Sigmoid colon (tissue), 7 donors: ENCODE measurements at regions of chr9 and their contacts with region 1.

Region 1: DNA sequence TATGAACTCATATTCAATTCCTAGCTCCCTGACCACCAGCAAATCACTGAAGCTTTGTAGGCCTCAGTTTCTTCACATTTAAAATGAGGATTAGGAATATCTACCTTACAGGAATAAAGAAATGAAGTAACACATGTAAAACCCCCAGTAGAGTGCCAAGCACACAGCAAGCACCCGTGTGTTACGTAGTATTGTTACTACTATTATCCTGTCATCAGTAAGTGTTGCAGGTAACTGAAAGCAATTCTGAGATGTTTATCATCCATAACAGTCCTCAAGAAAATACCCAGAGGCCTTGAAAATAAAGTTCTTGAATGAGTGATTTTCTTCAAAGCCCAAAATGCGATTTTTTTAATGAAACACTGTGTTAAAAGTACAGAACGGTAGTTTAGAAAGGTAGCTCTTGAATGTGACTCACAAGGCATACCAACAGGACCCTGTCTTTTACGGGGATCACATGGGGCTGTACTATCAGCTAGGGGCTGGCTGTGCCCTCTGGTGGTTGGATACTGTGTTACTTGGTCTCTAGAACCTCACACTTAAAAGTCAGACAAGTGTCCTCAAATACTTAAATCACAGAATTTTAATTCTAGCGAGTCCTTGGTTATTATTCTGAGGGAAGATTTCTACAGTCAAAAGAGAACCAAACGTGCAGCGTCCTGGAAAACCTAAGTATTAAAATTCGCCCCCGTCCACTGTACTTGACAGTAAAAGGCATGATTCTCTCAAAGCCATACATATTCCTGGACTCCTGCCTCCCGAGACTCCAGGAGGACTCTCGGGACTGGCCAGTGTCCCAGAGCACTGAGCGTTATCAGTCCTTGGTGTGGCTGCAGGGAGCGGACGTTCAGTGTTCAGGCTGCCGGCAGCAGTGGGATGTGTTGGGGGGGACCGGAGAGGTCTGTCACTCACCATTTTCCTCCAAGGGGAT is 725 bp downstream of the NDUFB6 start:
- DNase-seq: peak; percentile 74
- H3K4me3 ChIP-seq: peak overlapping the region; percentile 76 to 82 (median 80)
- H3K27ac ChIP-seq: peak overlapping the region; percentile 89 to 93 (median 91)
- H3K4me1 ChIP-seq: peaks cover 0 to 31% (median 23%) of the 10 kb centered on the region in 4 donors
- H3K27me3 ChIP-seq: no peaks in the 10 kb centered on the region
- CTCF ChIP-seq: peak; percentile 24 to 52 (median 42)
- EP300 ChIP-seq: no peak
- POLR2A ChIP-seq: no peak

Region 2: DNA sequence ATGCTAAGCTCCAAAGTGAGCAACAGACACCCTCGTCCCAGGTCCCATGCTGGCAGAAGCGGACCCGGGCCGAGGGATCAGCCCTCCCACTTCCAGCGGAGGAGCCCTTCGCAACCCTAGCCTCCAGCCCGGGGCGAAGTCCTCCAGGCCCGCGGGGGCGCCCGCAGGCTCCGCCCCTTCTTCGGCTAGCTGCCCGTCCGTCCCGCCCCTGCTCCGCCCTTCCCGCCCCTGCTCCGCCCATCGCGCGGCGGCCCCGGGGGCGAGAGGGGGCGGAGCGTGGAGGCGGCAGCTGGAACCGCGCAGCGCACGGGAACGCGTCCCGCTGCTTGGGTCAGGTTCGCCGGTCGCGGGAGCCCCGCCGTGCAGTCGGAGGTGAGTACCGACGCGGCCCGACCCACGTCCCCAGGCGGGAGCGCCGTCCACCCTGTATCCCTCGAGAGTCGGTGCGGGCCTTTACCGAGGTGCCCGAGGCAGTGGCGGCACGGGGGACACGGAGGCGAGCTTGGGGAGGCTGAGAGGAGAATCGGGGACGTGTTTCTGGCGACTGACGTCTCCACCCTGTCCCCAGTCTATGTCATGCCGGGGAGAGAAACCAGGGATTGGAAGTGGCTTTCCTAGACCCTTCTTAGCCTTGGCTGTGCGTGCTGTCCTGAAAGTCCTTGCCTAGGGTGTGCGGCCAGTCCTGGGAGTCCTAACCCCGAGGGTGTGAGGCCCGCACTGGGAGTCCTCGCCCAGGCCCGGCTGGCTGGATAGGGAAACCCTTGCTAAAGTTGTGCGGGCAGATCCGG is 187.7 kb before region 1 on chr9 and contains the start of gene ACO1:
- intact Hi-C with region 1: loop called (anchors 1 kb)
- DNase-seq: peak; percentile 94
- H3K4me3 ChIP-seq: peak within 1 kb of the TSS; percentile 58 to 84 (median 77)
- H3K27ac ChIP-seq: peak within 1 kb of the TSS; percentile 89 to 95 (median 92)
- H3K4me1 ChIP-seq: peaks cover 0 to 43% (median 35%) of the 10 kb centered on the region in 4 donors
- H3K27me3 ChIP-seq: no peaks in the 10 kb centered on the region
- CTCF ChIP-seq: no peak
- EP300 ChIP-seq: no peak
- POLR2A ChIP-seq: peak; percentile 64 to 72
- total RNA-seq, gene ACO1: 37.2 to 54.2 (median 40.0) TPM

Region 3: GRCh38 chr9:32413424-32413823 is 158.8 kb before region 1 on chr9:
- intact Hi-C with region 1: no loop called
- DNase-seq: no peak
- H3K4me3 ChIP-seq: no peak overlapping the region
- H3K27ac ChIP-seq: no peak overlapping the region
- H3K4me1 ChIP-seq: no peaks in the 10 kb centered on the region
- H3K27me3 ChIP-seq: no peaks in the 10 kb centered on the region
- CTCF ChIP-seq: no peak
- EP300 ChIP-seq: no peak
- POLR2A ChIP-seq: no peak

Region 4: DNA sequence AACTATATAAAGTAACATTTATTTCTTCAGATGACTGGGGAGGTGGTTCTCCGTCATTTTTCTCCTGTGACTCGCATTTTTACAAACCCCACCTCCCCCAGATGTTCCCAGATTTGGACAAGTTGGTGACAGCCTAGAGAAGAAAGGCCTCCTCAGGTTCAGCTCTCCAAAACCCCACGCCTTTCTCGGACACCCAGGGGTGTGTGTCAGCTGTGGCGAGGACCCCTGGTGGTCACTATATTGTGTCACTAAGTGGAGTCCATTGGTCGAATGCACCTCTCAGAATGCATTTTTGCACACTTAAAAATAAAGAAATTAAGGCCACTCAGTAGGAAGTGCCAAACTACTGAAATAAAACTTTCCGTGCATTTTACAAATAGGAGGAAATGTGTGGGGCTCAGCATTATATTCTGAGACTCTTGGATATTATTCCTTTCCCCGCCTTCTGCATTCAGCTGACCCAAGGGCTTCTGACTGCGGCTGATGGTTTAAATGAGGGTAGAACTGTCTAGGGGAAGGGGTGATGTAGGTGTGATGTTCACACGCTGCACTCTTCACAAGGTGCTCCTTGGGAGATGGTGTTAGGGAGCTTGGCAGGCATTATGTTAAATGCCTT is 140.2 kb before region 1 on chr9:
- intact Hi-C with region 1: loop called (anchors 5 kb)
- DNase-seq: peak; percentile 71
- H3K4me3 ChIP-seq: no peak overlapping the region
- H3K27ac ChIP-seq: no peak overlapping the region
- H3K4me1 ChIP-seq: peaks cover 0 to 17% (median 0%) of the 10 kb centered on the region in 4 donors
- H3K27me3 ChIP-seq: no peaks in the 10 kb centered on the region
- CTCF ChIP-seq: peak; percentile 7 to 50 (median 42)
- EP300 ChIP-seq: no peak
- POLR2A ChIP-seq: no peak

Region 5: DNA sequence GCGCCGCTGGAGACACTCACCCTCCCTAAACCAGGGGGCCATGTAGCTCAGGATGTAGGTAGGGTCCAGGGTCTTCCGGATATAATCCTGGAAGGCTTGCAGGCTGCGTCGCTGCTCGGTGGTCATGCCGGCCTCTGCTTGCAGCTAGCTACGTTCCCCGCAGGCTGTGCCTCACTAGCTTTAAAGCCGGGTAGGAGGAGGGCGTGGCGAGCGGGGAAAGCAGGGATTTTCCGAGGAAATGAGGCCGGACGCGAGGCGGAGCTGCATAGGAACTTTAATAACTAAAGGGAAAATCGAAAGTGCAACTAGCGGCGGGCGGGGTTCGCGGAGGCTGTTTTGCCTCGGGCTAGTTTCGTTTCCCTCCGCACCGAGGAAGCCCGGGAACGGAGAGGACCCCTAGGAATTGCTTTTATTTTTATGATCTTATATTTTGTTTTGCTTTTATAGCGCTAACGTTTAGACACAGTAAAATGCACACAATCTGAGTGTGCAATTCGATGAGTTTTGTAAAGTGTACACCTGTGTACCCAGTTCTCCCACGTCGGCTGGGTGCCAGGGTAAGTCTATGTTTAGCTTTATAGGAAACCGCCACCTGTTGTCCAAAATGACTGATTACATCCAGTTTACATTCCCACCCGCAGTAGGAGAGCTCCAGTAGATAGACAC is 46.1 kb before region 1 on chr9 and contains the start of gene RIGI:
- intact Hi-C with region 1: loop called (anchors 2 kb)
- DNase-seq: peak; percentile 96
- H3K4me3 ChIP-seq: peak within 1 kb of the TSS; percentile 55 to 69 (median 62)
- H3K27ac ChIP-seq: peak within 1 kb of the TSS; percentile 83 to 91 (median 86)
- H3K4me1 ChIP-seq: peaks cover 0 to 33% (median 20%) of the 10 kb centered on the region in 4 donors
- H3K27me3 ChIP-seq: no peaks in the 10 kb centered on the region
- CTCF ChIP-seq: peak in 1 of 4 experiments; percentile 26
- EP300 ChIP-seq: no peak
- POLR2A ChIP-seq: peak; percentile 43 to 60
- total RNA-seq, gene RIGI: 9.4 to 19.6 (median 13.9) TPM

Region 6: DNA sequence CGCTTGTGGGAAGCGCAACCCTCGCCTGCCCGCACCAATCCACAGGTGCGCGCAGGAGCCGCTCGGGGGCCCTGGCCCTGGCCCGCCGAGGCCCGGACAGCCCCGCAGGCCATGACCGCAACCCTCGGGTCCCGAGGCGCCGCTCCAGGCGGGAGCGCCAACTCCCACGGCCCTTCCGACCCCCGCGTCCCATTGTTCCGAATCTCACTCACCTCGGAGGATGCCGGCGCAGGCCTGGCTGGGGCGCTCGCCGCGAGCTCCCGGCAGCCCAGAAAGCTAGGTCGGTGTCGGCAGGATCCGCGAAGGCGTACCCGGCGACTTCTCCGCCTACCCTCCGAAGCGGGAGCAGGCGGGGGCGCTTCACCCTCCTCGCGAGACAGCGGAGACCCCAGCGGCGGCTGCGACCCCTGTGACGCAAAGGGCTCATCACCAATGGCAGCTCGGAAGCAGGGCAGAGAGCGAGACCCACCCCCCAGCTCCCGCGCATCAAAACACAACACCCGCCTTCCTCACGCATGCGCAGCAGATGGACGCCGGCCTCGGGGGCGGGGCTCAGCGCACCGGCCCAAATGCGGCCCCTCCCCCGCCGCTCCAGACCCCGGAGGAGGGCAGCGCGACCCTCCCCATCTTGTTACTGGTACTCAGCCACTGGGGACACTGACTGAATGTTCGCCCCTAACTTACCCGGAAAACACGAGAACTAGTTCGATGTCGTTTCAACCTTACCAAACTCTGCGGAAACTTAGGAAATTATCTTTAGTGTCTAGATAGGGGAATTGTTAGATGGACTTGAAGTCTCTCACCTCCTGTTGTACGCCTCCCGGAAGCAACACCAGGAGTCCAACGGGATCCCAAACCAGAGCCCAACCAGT is 21.4 kb before region 1 on chr9:
- intact Hi-C with region 1: loop called (anchors 2 kb)
- DNase-seq: peak; percentile 97
- H3K4me3 ChIP-seq: peak overlapping the region; percentile 62 to 93 (median 84)
- H3K27ac ChIP-seq: peak overlapping the region; percentile 89 to 99 (median 94)
- H3K4me1 ChIP-seq: peaks cover 0 to 32% (median 25%) of the 10 kb centered on the region in 4 donors
- H3K27me3 ChIP-seq: no peaks in the 10 kb centered on the region
- CTCF ChIP-seq: no peak
- EP300 ChIP-seq: peak in 2 of 4 donors; percentile 20 to 46
- POLR2A ChIP-seq: peak; percentile 25 to 29

Region 7: DNA sequence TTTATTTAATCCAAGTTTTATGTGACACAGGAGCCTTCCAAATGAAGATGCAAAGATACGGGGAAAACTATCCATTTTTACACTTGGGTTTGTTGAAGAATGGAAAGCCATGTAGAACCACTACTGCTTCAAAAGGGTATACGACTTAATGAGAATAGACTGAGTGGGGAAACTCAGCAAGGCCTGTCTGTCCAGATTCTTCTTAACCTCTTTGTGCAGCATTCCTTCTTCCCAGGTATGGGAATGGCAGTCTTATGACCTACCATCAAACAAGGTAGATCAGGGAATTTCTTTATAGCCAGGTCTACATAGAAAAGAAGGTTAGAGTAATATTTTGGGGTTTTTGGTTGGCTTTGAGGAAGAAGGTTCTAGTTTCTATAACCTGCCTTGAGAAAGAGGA is 405.8 kb after region 1 on chr9:
- intact Hi-C with region 1: no loop called
- DNase-seq: no peak
- H3K4me3 ChIP-seq: no peak overlapping the region
- H3K27ac ChIP-seq: no peak overlapping the region
- H3K4me1 ChIP-seq: no peaks in the 10 kb centered on the region
- H3K27me3 ChIP-seq: no peaks in the 10 kb centered on the region
- CTCF ChIP-seq: no peak
- EP300 ChIP-seq: no peak
- POLR2A ChIP-seq: no peak

Region 8: DNA sequence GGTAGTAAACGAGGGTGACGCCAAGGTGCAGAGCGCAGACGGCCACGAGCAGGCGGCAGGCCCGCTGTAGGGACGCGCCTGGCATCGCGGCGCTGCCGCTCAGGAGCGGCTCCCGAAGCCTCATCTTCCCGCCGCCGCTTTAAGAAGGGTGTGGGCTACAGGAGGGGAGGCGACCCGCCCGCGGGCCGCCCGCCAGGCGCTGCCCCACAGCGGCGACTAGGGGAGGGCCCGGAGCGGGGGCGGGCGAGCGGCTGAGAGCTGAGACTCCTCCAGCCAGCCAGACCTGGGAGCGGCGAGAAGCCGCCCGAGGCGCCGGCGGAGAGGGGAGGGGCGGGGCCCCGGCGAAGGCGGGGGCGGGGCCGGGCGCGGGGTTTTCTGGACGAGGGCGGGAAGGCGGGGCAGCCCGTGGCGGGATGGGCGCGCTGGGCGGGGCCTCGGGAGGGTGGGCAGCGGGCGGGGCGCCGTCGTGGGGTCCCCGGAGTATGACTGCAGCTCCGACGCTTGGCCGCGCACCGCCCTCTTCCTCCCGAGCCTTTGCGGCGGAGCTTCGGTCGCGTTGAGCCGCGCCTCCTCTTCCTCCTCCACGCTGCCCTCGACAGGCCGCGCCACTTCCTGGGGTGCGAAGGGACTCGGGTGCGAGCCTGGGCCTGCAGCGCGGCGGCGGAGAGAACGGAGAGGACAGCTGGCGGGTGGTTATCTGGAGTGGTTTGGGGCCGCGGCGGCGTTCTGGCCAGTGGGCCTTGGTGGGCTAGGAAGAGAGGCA is 595.0 kb after region 1 on chr9 and contains the start of gene B4GALT1:
- intact Hi-C with region 1: loop called (anchors 10 kb)
- DNase-seq: peak; percentile 97
- H3K4me3 ChIP-seq: peak within 1 kb of the TSS; percentile 66 to 98 (median 88)
- H3K27ac ChIP-seq: peak within 1 kb of the TSS; percentile 83 to 98 (median 92)
- H3K4me1 ChIP-seq: peaks cover 0 to 49% (median 45%) of the 10 kb centered on the region in 4 donors
- H3K27me3 ChIP-seq: no peaks in the 10 kb centered on the region
- CTCF ChIP-seq: no peak
- EP300 ChIP-seq: no peak
- POLR2A ChIP-seq: peak; percentile 65 to 74
- total RNA-seq, gene B4GALT1: 20.3 to 28.0 (median 25.0) TPM